Caco-2 (cell line): ENCODE measurements at regions of chr4 and their contacts with region 1.

Region 1: GRCh38 chr4:1809754-1810511 is 16.8 kb downstream of the FGFR3 start:
- DNase-seq: peak; percentile 84 to 92
- H3K4me3 ChIP-seq: no peak overlapping the region
- H3K4me3 Mint-ChIP-seq: no peak overlapping the region
- H3K27ac Mint-ChIP-seq: peak overlapping the region; percentile 12
- H3K4me1 ChIP-seq: peaks cover 4% of the 10 kb centered on the region; the same call in 1 of the 2 replicates
- H3K4me1 Mint-ChIP-seq: no peaks in the 10 kb centered on the region
- H3K27me3 ChIP-seq: no peaks in the 10 kb centered on the region
- H3K27me3 Mint-ChIP-seq: no peaks in the 10 kb centered on the region
- CTCF ChIP-seq: peak; percentile 94 to 95

Region 2: GRCh38 chr4:1792832-1793495 is 17.0 kb before region 1 on chr4 and contains the start of gene FGFR3:
- CTCF ChIA-PET with region 1: interaction called, 4 read pairs
- POLR2A ChIA-PET with region 1: interaction called, 11 read pairs
- intact Hi-C with region 1: loop called (anchors 1 kb)
- DNase-seq: peak; percentile 80 to 83
- H3K4me3 ChIP-seq: peak within 1 kb of the TSS; percentile 73
- H3K4me3 Mint-ChIP-seq: peak within 1 kb of the TSS; percentile 68
- H3K27ac Mint-ChIP-seq: no peak within 1 kb of the TSS
- H3K4me1 ChIP-seq: peaks cover 34% of the 10 kb centered on the region
- H3K4me1 Mint-ChIP-seq: peaks cover 6% of the 10 kb centered on the region
- H3K27me3 ChIP-seq: no peaks in the 10 kb centered on the region
- H3K27me3 Mint-ChIP-seq: no peaks in the 10 kb centered on the region
- CTCF ChIP-seq: no peak
- total RNA-seq, gene FGFR3: 112 and 132 TPM in 2 replicates

Region 3: GRCh38 chr4:2371765-2372487 is 562.0 kb after region 1 on chr4:
- CTCF ChIA-PET with region 1: no interaction called
- POLR2A ChIA-PET with region 1: no interaction called
- intact Hi-C with region 1: no loop called
- DNase-seq: no peak
- H3K4me3 ChIP-seq: no peak overlapping the region
- H3K4me3 Mint-ChIP-seq: no peak overlapping the region
- H3K27ac Mint-ChIP-seq: no peak overlapping the region
- H3K4me1 ChIP-seq: no peaks in the 10 kb centered on the region
- H3K4me1 Mint-ChIP-seq: no peaks in the 10 kb centered on the region
- H3K27me3 ChIP-seq: no peaks in the 10 kb centered on the region
- H3K27me3 Mint-ChIP-seq: no peaks in the 10 kb centered on the region
- CTCF ChIP-seq: no peak